ENCODE measurements at regions of chr1 and their contacts with region 1.

Region 1: GRCh38 chr1:1990222-1990621 is 13.4 kb downstream of the CFAP74 start:
- DNase-seq: no peak
- ATAC-seq: no peak
- H3K4me3 ChIP-seq: no peak overlapping the region
- H3K27ac ChIP-seq: no peak overlapping the region
- H3K4me1 ChIP-seq: no peaks in the 10 kb centered on the region; the same call in 1 of the 2 replicates
- H3K27me3 ChIP-seq: no peaks in the 10 kb centered on the region
- CTCF ChIP-seq: no peak

Region 2: DNA sequence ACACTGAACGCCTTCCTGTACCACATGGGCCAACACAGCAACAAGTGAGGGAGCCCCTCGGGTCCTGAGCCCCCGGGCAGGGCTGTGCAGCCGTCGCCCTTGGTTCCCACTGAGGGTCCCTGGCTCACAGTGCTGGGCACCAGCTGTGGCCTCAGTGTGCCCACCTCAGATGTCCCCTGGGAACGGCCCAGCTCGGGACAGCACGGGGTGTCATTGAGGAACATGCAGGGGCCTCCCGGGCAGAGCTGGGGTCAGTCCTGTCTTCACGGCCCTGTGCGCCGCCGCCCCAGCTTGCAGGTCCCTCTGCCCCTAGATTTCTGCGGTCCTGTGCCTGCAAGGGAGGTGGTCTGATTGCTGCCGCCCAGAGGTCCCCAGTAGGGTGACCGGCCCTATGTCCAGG is 501.0 kb before region 1 on chr1:
- CTCF ChIA-PET with region 1: no interaction called
- POLR2A ChIA-PET with region 1: no interaction called
- in situ Hi-C with region 1: no loop called
- intact Hi-C with region 1: no loop called
- DNase-seq: no peak
- ATAC-seq: no peak
- H3K4me3 ChIP-seq: no peak overlapping the region
- H3K27ac ChIP-seq: no peak overlapping the region
- H3K4me1 ChIP-seq: no peaks in the 10 kb centered on the region
- H3K27me3 ChIP-seq: no peaks in the 10 kb centered on the region
- CTCF ChIP-seq: no peak

Region 3: DNA sequence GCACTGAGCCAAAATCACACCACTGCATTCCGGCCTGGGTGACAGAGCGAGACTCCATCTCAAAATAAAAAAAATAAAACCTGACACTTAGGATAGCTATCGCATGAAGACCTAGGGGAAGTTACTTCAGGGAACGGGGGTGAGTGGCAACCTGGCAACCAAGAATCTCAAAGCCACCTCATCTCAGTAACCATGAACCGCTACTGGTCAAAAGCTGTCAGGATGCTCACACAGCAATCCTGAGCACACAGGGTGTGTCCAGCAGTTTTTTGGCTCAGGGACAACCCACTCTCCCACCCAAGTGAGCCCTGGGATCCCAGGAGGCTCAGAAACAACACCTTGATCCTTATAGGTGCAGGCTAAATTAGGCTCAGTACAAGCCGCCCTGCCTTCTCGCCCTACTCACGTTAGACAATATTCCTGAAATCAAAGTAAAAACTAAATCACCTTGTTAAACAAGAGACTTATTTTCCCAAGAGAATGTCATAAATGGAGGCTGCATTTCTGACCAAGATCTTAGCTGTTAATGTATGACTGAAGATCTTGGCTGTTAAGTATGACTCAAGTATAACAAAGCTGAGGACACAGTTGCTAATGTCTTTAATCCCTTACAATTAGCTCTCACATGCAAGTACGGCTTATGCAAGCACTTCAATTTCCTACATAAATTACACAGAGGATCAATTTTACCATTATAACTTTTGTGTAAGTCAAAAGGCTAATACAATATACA is 163.7 kb before region 1 on chr1:
- CTCF ChIA-PET with region 1: no interaction called
- POLR2A ChIA-PET with region 1: no interaction called
- in situ Hi-C with region 1: loop called (anchors 10 kb)
- intact Hi-C with region 1: no loop called
- DNase-seq: no peak
- ATAC-seq: no peak; the same call in 1 of the 2 replicates
- H3K4me3 ChIP-seq: no peak overlapping the region
- H3K27ac ChIP-seq: no peak overlapping the region
- H3K4me1 ChIP-seq: no peaks in the 10 kb centered on the region
- H3K27me3 ChIP-seq: no peaks in the 10 kb centered on the region
- CTCF ChIP-seq: no peak

Region 4: GRCh38 chr1:1959840-1960479 is 30.3 kb before region 1 on chr1:
- CTCF ChIA-PET with region 1: no interaction called
- POLR2A ChIA-PET with region 1: no interaction called
- in situ Hi-C with region 1: no loop called
- intact Hi-C with region 1: no loop called
- DNase-seq: no peak
- ATAC-seq: peak; percentile 93
- H3K4me3 ChIP-seq: peak overlapping the region in 1 of 2 experiments; percentile 22; a peak in 1 of 4 replicates
- H3K27ac ChIP-seq: no peak overlapping the region
- H3K4me1 ChIP-seq: peaks cover 10% of the 10 kb centered on the region
- H3K27me3 ChIP-seq: no peaks in the 10 kb centered on the region
- CTCF ChIP-seq: peak; percentile 96

Measured in Panc1 (cell line).